Heart left ventricle (tissue), 16 donors: ENCODE measurements at regions of chr5 and their contacts with region 1.

Region 1: GRCh38 chr5:94457788-94458187 is 160.6 kb downstream of the KIAA0825 start:
- DNase-seq: no peak
- ATAC-seq: no peak
- H3K4me3 ChIP-seq: no peak overlapping the region
- H3K27ac ChIP-seq: no peak overlapping the region
- H3K4me1 ChIP-seq: no peaks in the 10 kb centered on the region
- H3K27me3 ChIP-seq: no peaks in the 10 kb centered on the region
- CTCF ChIP-seq: no peak
- POLR2A ChIP-seq: no peak

Region 2: GRCh38 chr5:94130077-94130476 is 327.7 kb before region 1 on chr5:
- intact Hi-C with region 1: loop called in 1 of 10 experiments (anchors 5 kb)
- DNase-seq: no peak
- ATAC-seq: no peak
- H3K4me3 ChIP-seq: no peak overlapping the region
- H3K27ac ChIP-seq: no peak overlapping the region
- H3K4me1 ChIP-seq: no peaks in the 10 kb centered on the region
- H3K27me3 ChIP-seq: no peaks in the 10 kb centered on the region
- CTCF ChIP-seq: no peak
- POLR2A ChIP-seq: no peak

Region 3: GRCh38 chr5:94469889-94470288 is 12.1 kb after region 1 on chr5:
- intact Hi-C with region 1: no loop called
- DNase-seq: no peak
- ATAC-seq: no peak
- H3K4me3 ChIP-seq: no peak overlapping the region
- H3K27ac ChIP-seq: no peak overlapping the region
- H3K4me1 ChIP-seq: no peaks in the 10 kb centered on the region
- H3K27me3 ChIP-seq: no peaks in the 10 kb centered on the region
- CTCF ChIP-seq: no peak
- POLR2A ChIP-seq: no peak